CD4-positive, alpha-beta memory T cell (primary cell): ENCODE measurements at regions of chr17 and their contacts with region 1.

Region 1: DNA sequence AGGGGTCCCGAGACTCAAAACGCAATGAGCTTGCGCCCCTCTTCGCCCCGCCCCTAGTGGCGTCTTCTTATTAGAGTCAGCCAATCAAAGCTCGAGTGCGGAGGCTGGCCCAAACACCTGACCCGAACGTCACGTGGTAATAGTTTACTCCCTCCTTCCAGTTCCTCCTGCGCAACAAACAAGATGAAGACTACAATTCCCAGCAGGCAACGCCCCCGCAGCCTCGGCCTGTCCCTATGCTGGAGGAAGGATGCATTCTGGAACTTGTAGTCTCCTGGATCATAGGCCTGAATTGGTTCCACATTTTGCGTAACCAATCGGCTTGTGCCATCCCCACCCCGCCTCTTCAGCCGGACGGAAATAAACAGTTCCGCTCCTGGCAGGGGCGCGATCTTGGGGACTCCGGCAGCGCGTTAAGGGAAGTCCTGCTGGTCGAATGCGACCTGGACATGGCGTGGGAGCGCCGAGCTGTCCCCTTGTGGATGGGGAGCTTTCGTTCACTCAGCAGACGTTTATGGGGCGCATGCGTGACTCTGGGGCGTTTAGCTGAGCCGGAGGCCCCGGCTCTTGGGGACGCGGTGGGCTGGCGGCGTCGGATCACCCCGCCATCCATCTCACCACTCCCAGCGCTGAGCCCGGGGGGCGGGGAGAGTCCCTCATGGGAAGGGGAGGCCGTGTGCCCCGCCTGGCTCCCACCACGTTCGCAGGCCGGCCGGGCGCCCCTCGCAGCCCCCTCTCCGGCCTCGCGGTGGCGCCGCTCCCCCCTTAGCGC is at the start of gene WBP2:
- DNase-seq: peak; percentile 96 to 100 (median 99)
- H3K4me3 ChIP-seq: peak within 1 kb of the TSS; percentile 60 to 67
- H3K4me3 Mint-ChIP-seq: peak within 1 kb of the TSS in 6 of 8 donors; percentile 83 to 92 (median 88)
- H3K27ac ChIP-seq: peak within 1 kb of the TSS; percentile 80
- H3K27ac Mint-ChIP-seq: peak within 1 kb of the TSS in 5 of 7 donors; percentile 92 to 95 (median 94)
- H3K4me1 ChIP-seq: peaks cover 37% of the 10 kb centered on the region
- H3K4me1 Mint-ChIP-seq: peaks cover 20 to 50% (median 26%) of the 10 kb centered on the region in 4 donors
- H3K27me3 ChIP-seq: no peaks in the 10 kb centered on the region
- H3K27me3 Mint-ChIP-seq: no peaks in the 10 kb centered on the region
- total RNA-seq, gene WBP2: 159 to 160 TPM

Region 2: GRCh38 chr17:75779231-75779986 is 76.1 kb before region 1 on chr17:
- CTCF ChIA-PET with region 1: interaction called, 12 read pairs
- POLR2A ChIA-PET with region 1: interaction called, 556 read pairs
- intact Hi-C with region 1: loop called (anchors 1 kb)
- DNase-seq: peak; percentile 94 to 98 (median 98)
- H3K4me3 ChIP-seq: peak overlapping the region; percentile 18 to 84
- H3K4me3 Mint-ChIP-seq: peak overlapping the region; percentile 94 to 99 (median 98)
- H3K27ac ChIP-seq: peak overlapping the region; percentile 98
- H3K27ac Mint-ChIP-seq: peak overlapping the region; percentile 96 to 100 (median 99)
- H3K4me1 ChIP-seq: peaks cover 45% of the 10 kb centered on the region
- H3K4me1 Mint-ChIP-seq: peaks cover 32 to 70% (median 47%) of the 10 kb centered on the region in 4 donors
- H3K27me3 ChIP-seq: no peaks in the 10 kb centered on the region
- H3K27me3 Mint-ChIP-seq: peaks cover 1 to 2% of the 10 kb centered on the region in 2 donors

Region 3: GRCh38 chr17:75827252-75828115 is 28.0 kb before region 1 on chr17:
- CTCF ChIA-PET with region 1: interaction called, 20 read pairs
- POLR2A ChIA-PET with region 1: interaction called, 140 read pairs
- intact Hi-C with region 1: no loop called
- DNase-seq: peak; percentile 55 to 80 (median 71)
- H3K4me3 ChIP-seq: no peak overlapping the region
- H3K4me3 Mint-ChIP-seq: peak overlapping the region; percentile 17 to 73 (median 56)
- H3K27ac ChIP-seq: peak overlapping the region; percentile 59
- H3K27ac Mint-ChIP-seq: peak overlapping the region; percentile 66 to 91 (median 83)
- H3K4me1 ChIP-seq: peaks cover 26% of the 10 kb centered on the region
- H3K4me1 Mint-ChIP-seq: peaks cover 5 to 24% (median 14%) of the 10 kb centered on the region in 4 donors
- H3K27me3 ChIP-seq: no peaks in the 10 kb centered on the region
- H3K27me3 Mint-ChIP-seq: no peaks in the 10 kb centered on the region

Region 4: GRCh38 chr17:75845049-75845860 is 10.2 kb before region 1 on chr17:
- CTCF ChIA-PET with region 1: interaction called, 35 read pairs
- POLR2A ChIA-PET with region 1: interaction called, 157 read pairs
- intact Hi-C with region 1: loop called (anchors 1 kb)
- DNase-seq: peak; percentile 44 to 73 (median 49)
- H3K4me3 ChIP-seq: no peak overlapping the region
- H3K4me3 Mint-ChIP-seq: peak overlapping the region; percentile 25 to 50 (median 41)
- H3K27ac ChIP-seq: peak overlapping the region; percentile 90
- H3K27ac Mint-ChIP-seq: peak overlapping the region; percentile 47 to 90 (median 77)
- H3K4me1 ChIP-seq: peaks cover 49% of the 10 kb centered on the region
- H3K4me1 Mint-ChIP-seq: peaks cover 5 to 39% (median 22%) of the 10 kb centered on the region in 4 donors
- H3K27me3 ChIP-seq: no peaks in the 10 kb centered on the region
- H3K27me3 Mint-ChIP-seq: no peaks in the 10 kb centered on the region

Region 5: GRCh38 chr17:75904749-75905521 is 49.4 kb after region 1 on chr17 and contains the start of gene MRPL38:
- CTCF ChIA-PET with region 1: interaction called, 6 read pairs
- POLR2A ChIA-PET with region 1: interaction called, 123 read pairs
- intact Hi-C with region 1: loop called (anchors 1 kb)
- DNase-seq: peak; percentile 93 to 98 (median 95)
- H3K4me3 ChIP-seq: peak within 1 kb of the TSS; percentile 57 to 61
- H3K4me3 Mint-ChIP-seq: peak within 1 kb of the TSS; percentile 88 to 93 (median 92)
- H3K27ac ChIP-seq: peak within 1 kb of the TSS; percentile 74
- H3K27ac Mint-ChIP-seq: peak within 1 kb of the TSS; percentile 82 to 98 (median 94)
- H3K4me1 ChIP-seq: peaks cover 17% of the 10 kb centered on the region
- H3K4me1 Mint-ChIP-seq: peaks cover 5 to 20% (median 9%) of the 10 kb centered on the region in 4 donors
- H3K27me3 ChIP-seq: no peaks in the 10 kb centered on the region
- H3K27me3 Mint-ChIP-seq: no peaks in the 10 kb centered on the region
- total RNA-seq, gene MRPL38: 126 to 142 TPM